ENCODE measurements at regions of chr6 and their contacts with region 1.

Region 1: DNA sequence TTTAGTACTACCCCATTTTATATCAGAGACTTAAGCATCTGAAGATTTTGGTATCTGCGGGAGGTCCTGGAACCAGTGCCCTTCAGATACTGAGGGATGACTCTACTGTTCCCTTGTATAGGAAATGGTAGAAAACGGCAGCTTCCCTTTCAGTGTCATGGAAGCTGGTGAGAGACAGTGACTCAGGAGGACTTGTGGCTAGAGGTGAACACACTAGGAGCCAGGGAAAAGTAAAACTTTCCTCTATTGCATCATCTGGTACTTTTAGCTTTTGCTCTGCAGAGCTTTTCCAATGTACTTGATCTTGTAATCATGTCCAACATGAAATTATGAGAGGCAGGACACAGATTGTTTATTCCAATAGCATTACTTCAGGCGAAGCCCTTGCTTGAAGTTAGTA is 45.0 kb downstream of the RNF144B start:
- DNase-seq: no peak
- ATAC-seq: no peak
- H3K4me3 ChIP-seq: no peak overlapping the region
- H3K27ac ChIP-seq: no peak overlapping the region
- H3K4me1 ChIP-seq: no peaks in the 10 kb centered on the region
- H3K27me3 ChIP-seq: no peaks in the 10 kb centered on the region

Region 2: GRCh38 chr6:18496462-18496861 is 64.3 kb after region 1 on chr6:
- intact Hi-C with region 1: loop called in 1 of 4 experiments (anchors 5 kb)
- DNase-seq: no peak
- ATAC-seq: no peak
- H3K4me3 ChIP-seq: no peak overlapping the region
- H3K27ac ChIP-seq: no peak overlapping the region
- H3K4me1 ChIP-seq: no peaks in the 10 kb centered on the region
- H3K27me3 ChIP-seq: no peaks in the 10 kb centered on the region

Measured in right cardiac atrium (tissue), 5 donors.